Ascending aorta (tissue), 2 donors: ENCODE measurements at regions of chr6 and their contacts with region 1.

Region 1: DNA sequence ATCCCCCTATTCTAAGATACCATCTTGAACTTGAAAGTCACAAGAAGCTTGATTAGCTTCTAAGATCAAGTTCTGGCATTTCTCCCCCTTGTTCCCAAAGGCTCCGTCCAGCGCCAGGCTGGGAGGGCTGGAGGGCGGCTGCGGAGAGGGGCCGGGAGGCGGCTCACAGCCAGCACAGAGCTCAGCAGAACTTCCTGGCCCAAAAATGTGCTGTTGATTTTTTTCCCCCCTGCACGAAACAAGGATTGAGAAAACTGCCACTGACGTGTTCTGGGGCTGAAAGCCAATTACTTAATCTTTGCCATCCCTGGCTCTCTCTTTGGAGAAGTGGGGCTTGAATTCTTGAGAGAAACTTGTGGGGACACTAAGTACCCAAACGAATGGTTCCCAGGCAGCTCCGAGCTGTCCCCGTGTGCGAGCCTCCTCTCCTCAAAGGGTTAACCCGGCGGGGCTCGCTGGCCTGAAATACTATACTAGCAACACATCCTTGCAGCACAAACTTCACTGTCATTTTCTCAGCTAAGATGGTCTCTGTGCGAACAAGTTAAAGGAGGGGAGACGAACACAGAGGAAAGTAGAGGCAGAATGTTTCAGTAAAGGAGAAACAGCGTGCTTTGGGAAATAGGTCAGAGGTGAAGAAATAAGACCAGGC is 452 bp downstream of the TRAF3IP2 start:
- DNase-seq: peak in 1 of 2 donors; percentile 93
- H3K4me3 ChIP-seq: peak overlapping the region; percentile 64 to 65
- H3K27ac ChIP-seq: peak overlapping the region; percentile 92 to 96
- H3K4me1 ChIP-seq: peaks cover 13 to 35% of the 10 kb centered on the region in 2 donors
- H3K27me3 ChIP-seq: no peaks in the 10 kb centered on the region
- CTCF ChIP-seq: no peak

Region 2: GRCh38 chr6:111573892-111574797 is 31.1 kb before region 1 on chr6:
- intact Hi-C with region 1: loop called (anchors 2 kb)
- DNase-seq: peak in 1 of 2 donors; percentile 83
- H3K4me3 ChIP-seq: no peak overlapping the region
- H3K27ac ChIP-seq: peak overlapping the region; percentile 64 to 71
- H3K4me1 ChIP-seq: peaks cover 0 to 29% of the 10 kb centered on the region in 2 donors
- H3K27me3 ChIP-seq: no peaks in the 10 kb centered on the region
- CTCF ChIP-seq: no peak

Region 3: DNA sequence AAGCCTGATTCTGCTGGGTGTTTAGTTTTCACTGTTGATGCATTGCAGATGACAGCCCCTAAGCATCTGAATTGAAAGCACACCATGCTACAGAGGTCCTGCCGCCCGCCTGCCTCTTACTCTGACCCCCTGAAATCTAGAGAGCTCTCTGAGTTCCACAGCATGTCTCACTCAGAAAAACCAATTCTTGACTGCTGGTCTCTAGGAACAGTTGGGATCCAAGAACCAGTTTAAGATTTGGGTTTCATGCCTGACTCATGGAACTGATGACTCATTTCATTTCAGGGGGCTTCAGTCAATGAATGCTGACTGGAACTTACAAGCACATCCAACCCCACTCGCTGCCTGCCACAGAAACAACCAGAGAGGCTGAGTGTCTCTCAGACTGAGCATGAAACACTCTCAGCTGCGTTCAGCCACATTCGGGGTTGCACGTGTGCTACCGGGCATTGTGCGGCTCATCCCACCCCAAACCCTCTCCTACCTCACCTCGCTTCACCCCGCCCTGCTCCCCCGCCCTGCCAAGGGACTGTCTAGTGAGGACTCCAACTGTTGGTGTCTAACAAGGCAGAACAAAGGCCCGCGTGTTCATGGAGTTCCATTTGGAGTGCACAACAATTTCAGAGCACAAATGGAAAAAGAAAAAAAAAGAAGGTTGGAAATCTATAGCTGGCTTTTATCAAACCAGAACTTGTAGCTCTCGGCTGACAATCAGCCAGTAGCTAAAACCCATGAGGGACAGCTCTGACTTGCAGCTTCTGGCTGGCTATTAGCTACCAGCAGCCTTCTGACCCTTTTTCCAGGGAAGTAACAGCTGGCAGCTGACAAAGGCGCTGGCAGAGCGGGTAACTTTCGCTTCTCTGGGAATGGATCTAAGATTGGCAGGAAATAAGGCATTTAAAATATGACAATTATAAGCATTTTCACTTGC is 20.5 kb after region 1 on chr6:
- intact Hi-C with region 1: loop called (anchors 2 kb)
- DNase-seq: peak in 1 of 2 donors; percentile 75
- H3K4me3 ChIP-seq: peak overlapping the region; percentile 14 to 57
- H3K27ac ChIP-seq: peak overlapping the region; percentile 52 to 77
- H3K4me1 ChIP-seq: peaks cover 0 to 20% of the 10 kb centered on the region in 2 donors
- H3K27me3 ChIP-seq: no peaks in the 10 kb centered on the region
- CTCF ChIP-seq: no peak

Region 4: GRCh38 chr6:111873178-111874024 is 268.2 kb after region 1 on chr6 and contains the start of gene FYN:
- intact Hi-C with region 1: loop called (anchors 5 kb)
- DNase-seq: peak; percentile 93 to 99
- H3K4me3 ChIP-seq: peak within 1 kb of the TSS; percentile 79 to 83
- H3K27ac ChIP-seq: peak within 1 kb of the TSS; percentile 67 to 74
- H3K4me1 ChIP-seq: peaks cover 0 to 5% of the 10 kb centered on the region in 2 donors
- H3K27me3 ChIP-seq: no peaks in the 10 kb centered on the region
- CTCF ChIP-seq: peak; percentile 39 to 72 (median 53)
- total RNA-seq, gene FYN: 141 TPM